ENCODE measurements at regions of chr19 and their contacts with region 1.

Region 1: DNA sequence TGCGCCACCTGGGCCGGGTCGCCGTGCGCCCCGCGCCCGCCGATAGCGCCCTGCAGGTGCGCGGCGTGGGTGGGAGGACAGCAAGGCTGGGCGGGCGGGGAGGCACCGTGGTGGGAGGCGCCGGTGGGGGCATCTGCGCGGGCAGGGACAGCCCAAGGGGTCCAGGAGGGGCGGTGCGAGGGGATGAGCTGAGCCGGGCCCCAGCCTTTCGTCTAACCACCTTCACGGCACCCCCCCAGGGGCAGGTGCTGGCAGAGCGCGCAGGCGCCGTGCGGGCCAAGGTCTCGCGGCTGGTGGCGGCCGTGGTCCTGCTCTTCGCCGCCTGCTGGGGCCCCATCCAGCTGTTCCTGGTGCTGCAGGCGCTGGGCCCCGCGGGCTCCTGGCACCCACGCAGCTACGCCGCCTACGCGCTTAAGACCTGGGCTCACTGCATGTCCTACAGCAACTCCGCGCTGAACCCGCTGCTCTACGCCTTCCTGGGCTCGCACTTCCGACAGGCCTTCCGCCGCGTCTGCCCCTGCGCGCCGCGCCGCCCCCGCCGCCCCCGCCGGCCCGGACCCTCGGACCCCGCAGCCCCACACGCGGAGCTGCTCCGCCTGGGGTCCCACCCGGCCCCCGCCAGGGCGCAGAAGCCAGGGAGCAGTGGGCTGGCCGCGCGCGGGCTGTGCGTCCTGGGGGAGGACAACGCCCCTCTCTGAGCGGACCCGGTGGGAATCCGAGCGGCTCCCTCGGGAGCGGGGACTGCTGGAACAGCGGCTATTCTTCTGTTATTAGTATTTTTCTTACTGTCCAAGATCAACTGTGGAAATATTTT is 3.1 kb downstream of the KISS1R start:
- DNase-seq: peak in 1 of 3 donors; percentile 70
- ATAC-seq: no peak
- H3K4me3 ChIP-seq: peak overlapping the region; percentile 22
- H3K27ac ChIP-seq: no peak overlapping the region
- H3K4me1 ChIP-seq: no peaks in the 10 kb centered on the region
- H3K27me3 ChIP-seq: no peaks in the 10 kb centered on the region

Region 2: DNA sequence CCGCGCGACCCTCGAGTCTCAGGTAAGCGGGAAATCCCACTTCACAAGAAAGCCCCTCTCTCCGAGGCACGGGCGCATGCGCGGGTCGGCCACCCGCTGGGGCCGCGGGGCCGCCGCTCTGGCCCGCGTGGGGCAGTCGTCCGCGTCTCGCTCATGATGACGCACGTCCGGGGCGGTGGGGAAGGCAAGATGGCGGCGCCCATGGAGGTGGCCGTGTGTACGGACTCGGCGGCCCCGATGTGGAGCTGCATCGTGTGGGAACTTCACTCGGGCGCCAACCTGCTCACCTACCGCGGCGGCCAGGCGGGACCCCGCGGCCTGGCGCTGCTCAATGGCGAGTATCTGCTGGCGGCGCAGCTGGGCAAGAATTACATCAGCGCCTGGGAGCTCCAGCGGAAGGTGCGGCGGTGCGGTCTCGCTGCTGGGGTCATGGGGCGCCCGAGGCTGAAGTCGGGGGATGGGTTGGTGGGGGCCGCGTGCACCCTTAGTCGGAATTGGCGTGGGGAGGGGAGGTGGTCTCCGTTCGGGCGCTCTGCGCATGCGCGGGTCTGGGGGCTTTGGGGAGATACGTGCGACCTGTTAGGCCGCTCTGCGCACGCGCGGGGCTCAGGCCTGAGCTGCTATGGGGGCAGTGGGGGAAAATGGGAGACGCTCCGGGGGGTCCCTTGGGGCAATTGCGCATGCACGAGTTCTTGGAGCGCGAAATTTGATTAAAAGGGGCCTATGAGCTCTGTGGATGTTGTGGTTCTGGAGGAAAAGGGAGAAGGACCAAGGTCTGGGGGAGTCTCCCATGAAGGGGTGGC is 64.1 kb after region 1 on chr19 and contains the start of gene WDR18:
- intact Hi-C with region 1: loop called (anchors 1 to 2 kb)
- DNase-seq: peak; percentile 95 to 98 (median 98)
- ATAC-seq: peak; percentile 95 to 96
- H3K4me3 ChIP-seq: peak within 1 kb of the TSS; percentile 92
- H3K27ac ChIP-seq: peak within 1 kb of the TSS; percentile 84
- H3K4me1 ChIP-seq: no peaks in the 10 kb centered on the region
- H3K27me3 ChIP-seq: no peaks in the 10 kb centered on the region
- total RNA-seq, gene WDR18: 12.2 to 24.0 (median 15.8) TPM

Region 3: DNA sequence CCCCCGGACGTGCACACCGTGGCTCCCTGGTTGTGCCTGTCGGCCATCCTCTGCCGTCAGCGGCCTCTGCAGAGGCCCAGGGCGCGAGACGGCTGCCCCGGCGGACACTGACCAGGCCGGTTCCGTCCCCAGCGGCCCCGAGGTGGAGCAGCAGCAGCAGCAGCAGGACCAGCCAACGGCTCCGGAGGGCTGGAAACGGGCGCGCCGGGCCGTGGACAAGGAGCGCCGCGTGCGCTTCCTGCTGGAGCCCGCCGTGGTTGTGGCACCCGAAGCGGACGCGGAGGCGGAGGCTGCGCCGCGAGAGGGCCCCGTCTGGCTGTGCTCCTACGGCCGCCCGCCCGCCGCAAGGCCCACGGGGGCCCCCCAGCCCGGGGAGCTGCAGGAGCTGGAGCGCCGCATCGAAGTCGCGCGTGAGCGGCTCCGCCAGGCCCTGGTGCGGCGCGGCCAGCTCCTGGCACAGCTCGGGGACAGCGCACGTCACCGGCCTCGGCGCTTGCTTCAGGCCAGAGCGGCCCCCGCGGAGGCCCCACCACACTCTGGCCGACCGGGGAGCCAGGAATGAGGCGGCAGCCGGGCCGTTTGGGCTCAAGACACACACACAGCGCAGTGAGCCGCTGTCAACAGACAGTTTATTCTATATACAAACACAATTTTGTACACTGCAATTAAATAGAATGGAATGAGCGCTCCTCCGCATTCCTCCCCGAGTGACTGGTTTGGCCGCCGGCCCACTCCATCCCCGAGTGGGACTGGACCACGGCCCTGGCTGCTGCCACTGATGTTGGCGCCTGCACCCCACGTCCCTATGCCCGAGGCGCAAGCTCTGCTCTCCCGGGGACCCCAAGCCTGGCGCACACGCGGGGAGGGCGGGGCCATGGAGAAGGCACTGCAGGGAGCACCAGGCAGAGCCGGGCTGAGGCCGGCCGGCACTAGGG is 89.0 kb after region 1 on chr19:
- intact Hi-C with region 1: no loop called
- DNase-seq: peak; percentile 76 to 87 (median 82)
- ATAC-seq: peak; percentile 25 to 53
- H3K4me3 ChIP-seq: no peak overlapping the region
- H3K27ac ChIP-seq: no peak overlapping the region
- H3K4me1 ChIP-seq: no peaks in the 10 kb centered on the region
- H3K27me3 ChIP-seq: no peaks in the 10 kb centered on the region

Region 4: DNA sequence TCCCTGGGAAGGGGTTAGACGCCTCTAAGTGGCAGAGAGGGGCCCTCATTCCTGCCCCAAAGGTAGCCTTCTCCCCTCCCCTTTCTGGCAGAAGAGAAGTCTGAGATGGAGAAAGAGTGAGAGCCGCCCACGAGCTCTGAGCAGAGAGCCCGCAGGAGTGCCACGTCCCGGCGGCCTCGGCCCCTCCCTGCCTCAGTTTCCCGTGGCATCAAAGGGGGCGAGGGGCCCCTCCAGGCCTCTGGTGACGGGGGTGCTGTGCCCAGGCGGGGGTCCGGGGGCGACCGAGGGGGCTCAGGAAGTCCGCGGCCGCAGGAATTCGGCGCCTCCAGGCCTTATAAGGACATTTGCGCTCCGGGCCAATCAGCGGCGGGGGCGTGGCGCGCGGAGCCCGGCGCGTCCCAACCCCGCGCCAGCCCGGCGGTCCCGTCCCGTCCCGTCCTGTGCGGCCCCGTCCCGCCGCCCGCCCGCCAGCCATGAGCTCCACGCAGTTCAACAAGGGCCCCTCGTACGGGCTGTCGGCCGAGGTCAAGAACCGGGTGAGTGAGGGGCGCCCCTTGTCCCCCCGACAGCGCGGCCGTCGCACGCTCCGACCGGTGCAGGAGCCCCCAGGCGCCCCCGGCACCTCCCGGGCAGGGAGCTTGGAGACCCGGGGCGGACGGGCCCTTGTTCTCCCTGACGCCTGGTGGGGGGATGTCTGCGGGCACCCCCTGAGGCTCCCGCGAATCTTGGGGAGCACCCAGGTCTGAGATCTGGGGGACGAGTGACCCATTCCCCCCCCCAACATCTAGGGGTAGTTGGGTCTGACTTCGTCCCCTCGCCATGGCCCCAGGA is 106.1 kb after region 1 on chr19 and contains the start of gene CNN2:
- intact Hi-C with region 1: no loop called
- DNase-seq: peak; percentile 82 to 93 (median 93)
- ATAC-seq: peak; percentile 83 to 86
- H3K4me3 ChIP-seq: peak within 1 kb of the TSS; percentile 58
- H3K27ac ChIP-seq: peak within 1 kb of the TSS; percentile 73
- H3K4me1 ChIP-seq: no peaks in the 10 kb centered on the region
- H3K27me3 ChIP-seq: no peaks in the 10 kb centered on the region
- total RNA-seq, gene CNN2: 57.4 to 75.9 (median 63.8) TPM

Measured in right cardiac atrium (tissue), 5 donors.